ENCODE measurements at regions of chr2 and their contacts with region 1.

Region 1: DNA sequence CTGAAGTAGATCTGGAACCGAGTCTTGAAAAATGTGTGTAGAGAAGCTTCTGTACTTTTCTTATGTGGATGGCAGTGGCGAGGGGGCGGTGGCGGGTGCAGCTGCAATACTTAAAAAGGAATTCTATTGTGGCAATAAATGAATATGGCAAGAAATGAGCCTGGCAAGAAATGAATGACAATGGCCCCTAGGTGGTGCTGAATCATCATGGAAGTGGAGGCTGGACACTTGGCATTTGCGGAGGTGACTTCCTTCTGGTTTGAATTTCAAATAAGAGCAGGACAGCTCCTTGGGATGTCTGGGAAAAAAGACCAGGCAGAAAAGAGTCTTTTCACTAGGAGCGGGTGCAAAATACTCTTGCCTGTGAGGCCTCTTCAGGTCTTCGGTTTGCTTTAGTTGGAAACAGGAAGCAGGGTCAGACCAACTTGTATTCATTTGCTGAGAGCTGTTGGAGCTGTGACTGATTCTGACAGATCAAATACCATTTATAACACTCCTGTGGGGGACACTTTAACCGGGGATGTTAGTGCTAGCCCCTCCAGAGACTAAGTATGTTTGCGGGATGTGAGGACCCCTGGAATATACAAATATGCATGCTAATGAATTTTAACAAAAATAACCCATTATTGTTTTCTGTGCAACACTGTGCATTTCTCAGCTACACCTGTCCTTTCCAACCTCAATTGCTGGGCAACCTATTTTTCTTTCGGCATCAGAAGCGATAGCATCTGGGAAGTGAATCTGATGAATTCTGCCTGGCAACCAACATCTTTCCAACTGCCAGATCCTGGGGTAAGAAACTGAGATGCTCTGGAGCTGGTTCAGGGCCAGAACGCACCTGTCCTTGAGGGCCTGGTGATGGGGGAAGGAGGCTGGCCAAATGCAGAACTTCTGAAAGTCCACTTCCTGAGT is 35.4 kb downstream of the FASTKD2 start:
- DNase-seq: peak; percentile 72 to 80 (median 77)
- H3K4me3 ChIP-seq: peak overlapping the region in 5 of 7 experiments; percentile 42 to 77 (median 66)
- H3K27ac ChIP-seq: no peak overlapping the region
- H3K4me1 ChIP-seq: peaks cover 7 to 42% (median 30%) of the 10 kb centered on the region in 4 experiments
- H3K27me3 ChIP-seq: no peaks in the 10 kb centered on the region

Region 2: GRCh38 chr2:206502729-206503128 is 298.0 kb before region 1 on chr2:
- CTCF ChIA-PET with region 1: no interaction called
- POLR2A ChIA-PET with region 1: no interaction called
- DNase-seq: no peak
- H3K4me3 ChIP-seq: no peak overlapping the region
- H3K27ac ChIP-seq: no peak overlapping the region
- H3K4me1 ChIP-seq: no peaks in the 10 kb centered on the region
- H3K27me3 ChIP-seq: no peaks in the 10 kb centered on the region

Region 3: GRCh38 chr2:206790311-206790935 is 10.3 kb before region 1 on chr2:
- CTCF ChIA-PET with region 1: interaction called, 14 read pairs
- POLR2A ChIA-PET with region 1: no interaction called
- DNase-seq: no peak
- H3K4me3 ChIP-seq: no peak overlapping the region
- H3K27ac ChIP-seq: peak overlapping the region in 1 of 2 experiments; percentile 16
- H3K4me1 ChIP-seq: no peaks in the 10 kb centered on the region
- H3K27me3 ChIP-seq: no peaks in the 10 kb centered on the region

Region 4: GRCh38 chr2:206823178-206823577 is 22.4 kb after region 1 on chr2:
- CTCF ChIA-PET with region 1: interaction called, 13 read pairs
- POLR2A ChIA-PET with region 1: no interaction called
- DNase-seq: no peak
- H3K4me3 ChIP-seq: no peak overlapping the region
- H3K27ac ChIP-seq: no peak overlapping the region
- H3K4me1 ChIP-seq: peaks cover 0 to 14% (median 5%) of the 10 kb centered on the region in 4 experiments
- H3K27me3 ChIP-seq: no peaks in the 10 kb centered on the region

Region 5: DNA sequence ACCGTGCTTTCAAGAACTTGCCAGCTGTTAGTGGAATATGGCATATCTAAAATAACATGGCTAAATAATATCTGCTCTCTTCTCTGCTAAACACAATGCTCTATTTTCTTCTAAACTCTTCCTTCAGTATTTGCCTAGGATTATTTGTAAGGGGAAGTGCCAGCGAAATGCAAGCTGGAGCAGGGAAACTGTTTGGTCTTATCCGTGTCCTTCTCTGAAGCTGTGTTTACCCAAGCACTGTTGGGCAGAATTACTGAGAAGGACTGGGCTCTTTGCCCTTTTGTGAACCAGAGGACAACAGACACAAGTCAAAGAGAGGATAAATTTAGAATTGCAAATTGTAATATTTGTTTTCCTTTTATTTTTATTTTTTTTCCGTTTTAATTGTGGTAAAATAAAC is 162.2 kb after region 1 on chr2:
- CTCF ChIA-PET with region 1: no interaction called
- POLR2A ChIA-PET with region 1: no interaction called
- DNase-seq: no peak
- H3K4me3 ChIP-seq: no peak overlapping the region
- H3K27ac ChIP-seq: no peak overlapping the region
- H3K4me1 ChIP-seq: peaks cover 0 to 4% (median 0%) of the 10 kb centered on the region in 4 experiments
- H3K27me3 ChIP-seq: no peaks in the 10 kb centered on the region

Region 6: DNA sequence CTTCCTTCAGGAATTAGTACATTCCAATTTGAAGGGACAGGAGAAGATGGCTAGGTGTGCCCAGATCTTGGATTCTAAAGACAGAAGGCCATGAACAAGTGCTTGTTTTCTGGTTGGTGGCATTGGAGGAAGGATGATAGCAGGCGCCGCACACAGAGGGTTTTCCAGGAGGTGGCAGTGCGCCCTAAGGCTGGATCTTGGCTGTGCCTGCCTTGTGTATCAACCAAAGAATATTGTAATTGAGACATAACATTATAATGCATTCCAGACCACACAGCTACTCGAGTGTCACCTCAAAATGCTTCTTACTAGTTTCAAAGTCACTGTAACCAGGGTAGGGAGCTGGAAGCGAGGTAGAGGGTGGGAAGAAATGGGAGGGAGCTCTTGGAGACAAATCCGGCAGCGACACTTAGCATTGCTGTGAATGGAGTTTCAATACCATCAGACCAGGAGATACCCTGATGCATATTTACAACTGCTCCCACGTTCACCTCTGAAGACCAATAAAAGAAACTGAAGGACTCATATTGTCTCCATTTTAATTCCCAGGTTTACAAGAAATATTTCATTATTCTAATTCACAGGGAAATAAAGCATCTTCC is 181.1 kb after region 1 on chr2:
- CTCF ChIA-PET with region 1: interaction called, 21 read pairs
- POLR2A ChIA-PET with region 1: no interaction called
- DNase-seq: peak; percentile 60 to 86 (median 80)
- H3K4me3 ChIP-seq: no peak overlapping the region
- H3K27ac ChIP-seq: no peak overlapping the region
- H3K4me1 ChIP-seq: peaks cover 0 to 28% (median 0%) of the 10 kb centered on the region in 4 experiments
- H3K27me3 ChIP-seq: no peaks in the 10 kb centered on the region

Region 7: GRCh38 chr2:206989306-206989705 is 188.5 kb after region 1 on chr2:
- CTCF ChIA-PET with region 1: interaction called, 21 read pairs
- POLR2A ChIA-PET with region 1: no interaction called
- DNase-seq: peak; percentile 23 to 64 (median 59)
- H3K4me3 ChIP-seq: no peak overlapping the region
- H3K27ac ChIP-seq: no peak overlapping the region
- H3K4me1 ChIP-seq: peaks cover 0 to 37% (median 16%) of the 10 kb centered on the region in 4 experiments
- H3K27me3 ChIP-seq: no peaks in the 10 kb centered on the region

Region 8: GRCh38 chr2:207473049-207473930 is 672.5 kb after region 1 on chr2:
- CTCF ChIA-PET with region 1: interaction called, 31 read pairs
- POLR2A ChIA-PET with region 1: no interaction called
- DNase-seq: peak; percentile 70 to 79 (median 78)
- H3K4me3 ChIP-seq: no peak overlapping the region
- H3K27ac ChIP-seq: no peak overlapping the region
- H3K4me1 ChIP-seq: peaks cover 0 to 12% (median 5%) of the 10 kb centered on the region in 4 experiments
- H3K27me3 ChIP-seq: no peaks in the 10 kb centered on the region

Measured in common myeloid progenitor, CD34-positive (primary cell).